Common myeloid progenitor, CD34-positive (primary cell): ENCODE measurements at regions of chr2 and their contacts with region 1.

Region 1: GRCh38 chr2:215949991-215950404 is 63.4 kb downstream of the MREG start:
- DNase-seq: peak; percentile 56 to 73 (median 71)
- H3K4me3 ChIP-seq: no peak overlapping the region
- H3K27ac ChIP-seq: no peak overlapping the region
- H3K4me1 ChIP-seq: no peaks in the 10 kb centered on the region
- H3K27me3 ChIP-seq: no peaks in the 10 kb centered on the region

Region 2: DNA sequence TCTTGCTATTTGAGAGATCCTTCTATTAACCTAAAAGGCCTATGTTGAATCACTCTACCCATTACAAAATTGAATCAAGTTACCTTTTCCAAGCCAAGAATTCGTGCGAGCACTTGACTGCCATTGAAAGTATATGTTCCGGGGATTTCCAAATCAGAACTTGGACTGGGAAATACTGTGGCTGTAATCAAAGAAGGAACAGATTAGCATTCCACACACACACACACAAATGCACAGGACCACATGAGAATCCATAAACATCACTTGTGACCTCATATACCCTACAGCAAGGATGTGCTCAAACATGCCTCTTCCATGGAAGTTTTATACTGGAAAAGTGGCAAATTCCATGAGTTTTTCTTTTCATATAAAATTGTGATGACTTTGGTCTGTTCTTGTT is 897.6 kb before region 1 on chr2:
- CTCF ChIA-PET with region 1: no interaction called
- POLR2A ChIA-PET with region 1: no interaction called
- DNase-seq: no peak
- H3K4me3 ChIP-seq: no peak overlapping the region
- H3K27ac ChIP-seq: no peak overlapping the region
- H3K4me1 ChIP-seq: no peaks in the 10 kb centered on the region
- H3K27me3 ChIP-seq: no peaks in the 10 kb centered on the region

Region 3: DNA sequence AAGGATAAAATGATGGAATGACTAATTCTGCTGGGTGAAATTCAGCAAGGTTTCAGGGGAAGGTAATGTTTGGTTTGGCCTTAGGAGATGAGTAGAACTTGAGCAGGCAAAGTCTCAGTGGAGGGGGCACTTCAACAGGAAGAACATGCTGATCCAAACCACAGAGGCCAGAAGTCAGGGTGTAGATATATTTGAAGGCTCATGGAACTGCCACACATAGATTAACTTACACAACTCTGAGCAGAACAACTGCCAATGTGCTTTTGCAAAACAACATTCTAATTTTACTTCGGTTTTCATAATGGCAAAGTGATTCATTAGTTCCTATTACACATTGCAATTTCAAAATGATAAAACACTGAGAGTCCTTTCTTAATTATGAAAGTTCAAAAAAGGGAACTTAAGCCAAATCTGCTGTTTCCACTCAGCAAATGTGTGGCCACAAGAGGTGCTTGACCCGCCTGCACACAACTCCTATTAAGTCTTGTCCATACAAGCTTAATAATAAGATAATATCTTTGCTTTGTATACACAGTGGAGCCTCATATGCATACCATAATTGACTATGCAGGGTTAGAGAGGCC is 221.4 kb before region 1 on chr2:
- CTCF ChIA-PET with region 1: no interaction called
- POLR2A ChIA-PET with region 1: no interaction called
- DNase-seq: peak; percentile 20 to 90 (median 81)
- H3K4me3 ChIP-seq: no peak overlapping the region
- H3K27ac ChIP-seq: no peak overlapping the region
- H3K4me1 ChIP-seq: peaks cover 6 to 16% (median 14%) of the 10 kb centered on the region in 4 experiments
- H3K27me3 ChIP-seq: no peaks in the 10 kb centered on the region

Region 4: GRCh38 chr2:215900843-215901242 is 49.2 kb before region 1 on chr2:
- CTCF ChIA-PET with region 1: no interaction called
- POLR2A ChIA-PET with region 1: no interaction called
- DNase-seq: peak; percentile 50 to 90 (median 81)
- H3K4me3 ChIP-seq: peak overlapping the region in 2 of 7 experiments; percentile 20 to 21
- H3K27ac ChIP-seq: no peak overlapping the region
- H3K4me1 ChIP-seq: peaks cover 7 to 26% (median 20%) of the 10 kb centered on the region in 4 experiments
- H3K27me3 ChIP-seq: no peaks in the 10 kb centered on the region

Region 5: GRCh38 chr2:215969131-215969841 is 19.3 kb after region 1 on chr2:
- CTCF ChIA-PET with region 1: interaction called, 19 read pairs
- POLR2A ChIA-PET with region 1: no interaction called
- DNase-seq: no peak
- H3K4me3 ChIP-seq: no peak overlapping the region
- H3K27ac ChIP-seq: no peak overlapping the region
- H3K4me1 ChIP-seq: peaks cover 0 to 55% (median 19%) of the 10 kb centered on the region in 4 experiments
- H3K27me3 ChIP-seq: no peaks in the 10 kb centered on the region

Region 6: GRCh38 chr2:216006164-216006663 is 56.2 kb after region 1 on chr2:
- CTCF ChIA-PET with region 1: interaction called, 15 read pairs
- POLR2A ChIA-PET with region 1: no interaction called
- DNase-seq: peak; percentile 80 to 93 (median 92)
- H3K4me3 ChIP-seq: peak overlapping the region in 5 of 7 experiments; percentile 4 to 66 (median 58)
- H3K27ac ChIP-seq: peak overlapping the region; percentile 78 to 79
- H3K4me1 ChIP-seq: peaks cover 20 to 70% (median 66%) of the 10 kb centered on the region in 4 experiments
- H3K27me3 ChIP-seq: no peaks in the 10 kb centered on the region

Region 7: GRCh38 chr2:216013080-216013909 is 63.3 kb after region 1 on chr2 and contains the start of gene MREG:
- CTCF ChIA-PET with region 1: interaction called, 184 read pairs
- POLR2A ChIA-PET with region 1: no interaction called
- DNase-seq: peak; percentile 85 to 93 (median 93)
- H3K4me3 ChIP-seq: peak within 1 kb of the TSS; percentile 79 to 94 (median 88)
- H3K27ac ChIP-seq: peak within 1 kb of the TSS; percentile 61 to 79
- H3K4me1 ChIP-seq: peaks cover 20 to 54% (median 42%) of the 10 kb centered on the region in 4 experiments
- H3K27me3 ChIP-seq: no peaks in the 10 kb centered on the region

Region 8: DNA sequence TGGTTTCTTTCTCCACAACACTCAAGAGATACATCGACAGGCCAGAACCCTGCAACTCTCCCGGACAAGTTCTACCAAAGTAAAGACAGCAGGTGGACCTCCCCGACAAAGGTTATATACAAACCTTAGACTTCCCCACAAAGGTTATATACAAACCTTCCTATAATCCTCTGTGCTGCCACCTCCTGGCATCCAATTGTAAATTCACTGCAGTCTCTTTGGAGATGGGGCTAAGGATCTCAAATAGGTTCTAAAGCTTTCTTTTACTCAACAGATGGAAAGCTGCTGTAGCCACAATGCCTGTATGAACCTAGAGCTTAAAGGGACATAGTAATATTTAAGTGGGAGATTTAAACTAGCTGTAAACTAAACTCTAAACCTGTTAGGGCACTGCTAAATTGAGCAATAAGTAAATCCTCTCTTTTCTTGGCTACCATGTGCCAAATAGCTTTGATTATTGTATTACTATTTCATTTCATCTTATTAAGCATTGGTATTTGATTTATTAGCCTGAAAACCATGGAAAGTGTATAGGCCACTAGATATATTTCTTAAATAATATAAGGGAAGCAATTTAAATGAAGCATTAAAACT is 73.2 kb after region 1 on chr2:
- CTCF ChIA-PET with region 1: interaction called, 184 read pairs
- POLR2A ChIA-PET with region 1: no interaction called
- DNase-seq: peak; percentile 53 to 74 (median 65)
- H3K4me3 ChIP-seq: no peak overlapping the region
- H3K27ac ChIP-seq: no peak overlapping the region
- H3K4me1 ChIP-seq: peaks cover 0 to 3% (median 0%) of the 10 kb centered on the region in 4 experiments
- H3K27me3 ChIP-seq: no peaks in the 10 kb centered on the region